GM10248 (cell line): ENCODE measurements at regions of chr3 and their contacts with region 1.

Region 1: DNA sequence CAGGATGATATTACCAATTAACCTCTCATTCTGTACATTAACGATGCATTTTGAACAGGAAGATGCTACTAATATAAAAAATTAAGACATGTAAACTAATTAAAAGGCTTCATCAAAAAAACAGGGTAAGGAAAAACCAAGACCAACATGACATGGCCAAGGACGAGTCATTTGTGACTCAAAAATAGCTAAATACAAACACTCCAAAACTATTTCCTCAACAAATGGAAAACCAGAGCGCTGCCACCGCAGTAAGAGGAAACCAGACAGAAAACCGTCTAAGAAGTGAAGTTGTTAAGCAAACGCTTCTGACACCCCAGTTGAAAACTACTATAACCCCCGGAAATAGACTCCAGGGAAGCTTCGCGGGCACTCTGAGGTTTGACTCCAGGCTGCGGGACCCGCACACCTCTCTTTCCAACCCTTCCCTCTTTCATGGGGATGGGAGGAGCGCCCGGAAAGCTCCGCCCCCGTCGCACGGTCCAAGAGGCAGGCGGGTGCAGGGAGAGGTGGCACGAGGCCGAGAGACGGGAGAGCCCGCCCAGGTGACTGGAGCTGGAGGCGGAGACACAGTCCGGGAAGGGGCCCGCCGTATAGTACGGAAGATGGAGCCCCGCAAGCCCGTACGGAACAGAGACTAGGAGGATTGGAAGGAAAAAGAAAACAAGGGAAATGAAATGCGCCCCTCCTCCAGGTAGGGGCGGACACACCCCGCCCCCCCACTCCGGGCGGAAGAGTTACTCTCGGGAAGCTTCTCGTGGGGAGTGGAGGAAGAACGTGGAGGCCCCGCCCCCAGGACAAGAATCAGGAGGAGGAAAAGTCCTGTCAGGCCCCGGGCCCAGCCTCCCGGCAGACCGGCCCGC is 708 bp downstream of the DCAF1 start:
- DNase-seq: peak; percentile 90
- CTCF ChIP-seq: no peak

Region 2: GRCh38 chr3:51391075-51391567 is 108.0 kb before region 1 on chr3 and contains the start of gene RBM15B:
- CTCF ChIA-PET with region 1: interaction called, 28 read pairs
- POLR2A ChIA-PET with region 1: no interaction called
- DNase-seq: peak; percentile 97
- CTCF ChIP-seq: peak; percentile 95

Region 3: DNA sequence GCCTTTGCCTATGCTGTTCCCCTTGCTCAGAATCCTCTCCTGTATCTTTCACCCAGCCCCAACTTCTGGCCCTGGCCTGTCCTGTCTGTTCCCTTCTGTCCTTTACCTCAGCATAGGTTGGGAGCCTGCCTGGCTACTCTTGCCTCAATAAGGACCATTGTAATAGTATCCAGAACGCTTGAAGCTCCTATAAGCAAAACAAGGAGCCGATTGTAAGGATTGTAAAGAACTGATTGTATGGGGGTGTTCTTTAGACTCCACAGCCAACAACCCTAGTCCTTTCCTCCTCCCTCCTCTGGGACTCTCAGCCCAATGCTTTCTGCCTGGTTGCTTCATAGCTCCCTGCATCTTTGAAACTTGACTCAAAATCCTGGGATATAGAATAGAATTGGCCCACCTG is 20.7 kb after region 1 on chr3:
- CTCF ChIA-PET with region 1: interaction called, 113 read pairs
- POLR2A ChIA-PET with region 1: no interaction called
- DNase-seq: no peak
- CTCF ChIP-seq: no peak

Region 4: DNA sequence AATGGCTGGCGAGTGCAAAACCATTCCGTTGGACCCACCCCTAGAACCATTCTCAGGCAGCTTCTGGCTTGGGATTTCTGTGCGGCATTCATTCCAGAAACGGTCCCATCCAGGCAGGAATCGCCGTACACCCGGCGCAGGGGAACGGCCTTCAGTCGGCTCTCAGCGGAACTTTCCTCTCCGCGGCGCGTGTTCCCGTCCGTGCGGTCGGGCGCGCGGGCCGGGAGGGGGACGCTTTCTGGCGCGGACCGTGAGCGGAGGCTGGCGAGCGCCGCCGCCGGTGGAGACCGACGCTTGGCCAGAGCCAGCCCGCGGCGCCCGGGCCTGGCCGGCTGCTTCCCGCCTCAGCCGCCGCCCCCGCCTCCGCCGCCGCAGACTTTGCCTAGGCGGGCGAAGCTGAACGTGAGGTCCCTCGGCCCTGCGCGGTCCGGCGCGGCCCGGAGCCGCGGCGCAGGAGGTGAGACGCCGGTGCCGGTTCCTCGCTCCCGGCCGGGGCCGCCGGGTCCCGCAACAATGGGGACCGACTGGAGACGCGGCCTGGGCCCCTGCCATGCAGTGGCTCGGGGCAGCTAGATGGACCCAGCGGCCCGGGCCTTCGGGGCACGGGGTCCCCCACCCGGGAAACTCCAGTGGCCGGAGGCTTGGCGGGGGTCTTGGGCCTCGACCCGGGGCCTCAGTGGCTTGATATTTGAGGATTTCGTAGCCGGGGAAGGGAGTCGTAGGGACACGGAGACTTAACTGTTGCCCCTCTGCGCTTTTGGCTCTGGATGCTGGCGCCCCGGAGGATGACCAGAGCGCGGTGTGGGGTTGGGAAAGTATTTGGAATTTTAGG is 39.6 kb after region 1 on chr3 and contains the start of gene RAD54L2:
- CTCF ChIA-PET with region 1: interaction called, 58 read pairs
- POLR2A ChIA-PET with region 1: interaction called, 6 read pairs
- DNase-seq: peak; percentile 91
- CTCF ChIP-seq: peak; percentile 46

Region 5: GRCh38 chr3:51646091-51646490 is 147.0 kb after region 1 on chr3:
- CTCF ChIA-PET with region 1: interaction called, 49 read pairs
- POLR2A ChIA-PET with region 1: no interaction called
- DNase-seq: no peak
- CTCF ChIP-seq: no peak

Region 6: DNA sequence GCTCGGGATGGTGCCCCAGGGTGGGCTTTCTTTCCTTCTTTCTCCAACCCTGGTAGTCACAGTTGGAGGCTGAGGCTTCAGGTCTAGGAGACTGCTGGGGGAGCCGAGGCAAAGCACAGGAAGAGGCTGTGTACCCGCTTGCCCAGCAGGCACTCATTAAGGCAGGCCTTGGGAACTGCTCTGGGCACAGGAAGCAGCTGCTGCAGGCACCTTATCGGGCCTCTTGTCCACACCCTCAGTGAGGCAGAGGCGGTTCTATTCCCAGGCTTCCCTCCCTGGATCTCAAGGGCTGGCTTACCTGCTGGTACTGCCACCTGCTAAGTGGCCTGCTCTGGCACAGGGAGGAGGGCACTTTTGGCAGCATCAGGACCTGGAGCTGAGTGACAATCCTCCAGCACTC is 191.9 kb after region 1 on chr3:
- CTCF ChIA-PET with region 1: interaction called, 477 read pairs
- POLR2A ChIA-PET with region 1: no interaction called
- DNase-seq: no peak
- CTCF ChIP-seq: no peak

Region 7: GRCh38 chr3:52402706-52403270 is 903.7 kb after region 1 on chr3:
- CTCF ChIA-PET with region 1: no interaction called
- POLR2A ChIA-PET with region 1: interaction called, 13 read pairs
- DNase-seq: no peak
- CTCF ChIP-seq: no peak